ENCODE measurements at regions of chr2 and their contacts with region 1.

Region 1: DNA sequence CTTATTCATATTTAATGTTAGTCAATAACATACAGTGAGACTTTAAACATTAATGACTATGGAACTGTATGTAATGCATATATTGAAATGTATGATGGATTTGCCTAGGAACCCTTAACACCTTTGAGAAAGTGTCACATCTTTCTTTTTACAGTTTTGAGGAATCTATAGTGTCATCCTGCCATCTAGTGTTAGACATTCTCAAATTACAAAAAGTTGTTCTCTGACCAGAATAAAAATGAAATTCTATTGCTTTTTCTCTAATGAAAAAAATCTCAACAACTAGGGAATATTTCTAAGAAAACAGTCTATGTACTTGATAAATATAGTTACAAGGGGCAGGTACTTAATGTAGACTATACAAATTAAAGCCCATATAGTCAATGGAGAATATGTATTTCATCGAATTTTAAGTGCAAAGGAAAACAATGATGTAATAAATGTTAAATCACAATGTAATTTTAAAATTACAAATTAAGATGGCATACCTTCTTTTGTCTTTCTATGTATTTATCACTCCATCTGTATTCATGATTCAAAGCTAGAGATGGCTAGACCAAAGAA is 5.1 kb upstream of the CALCRL start:
- DNase-seq: no peak
- H3K4me3 ChIP-seq: no peak overlapping the region
- H3K27ac ChIP-seq: no peak overlapping the region
- H3K4me1 ChIP-seq: no peaks in the 10 kb centered on the region
- H3K27me3 ChIP-seq: no peaks in the 10 kb centered on the region
- CTCF ChIP-seq: peak in 1 of 3 experiments; percentile 3

Region 2: DNA sequence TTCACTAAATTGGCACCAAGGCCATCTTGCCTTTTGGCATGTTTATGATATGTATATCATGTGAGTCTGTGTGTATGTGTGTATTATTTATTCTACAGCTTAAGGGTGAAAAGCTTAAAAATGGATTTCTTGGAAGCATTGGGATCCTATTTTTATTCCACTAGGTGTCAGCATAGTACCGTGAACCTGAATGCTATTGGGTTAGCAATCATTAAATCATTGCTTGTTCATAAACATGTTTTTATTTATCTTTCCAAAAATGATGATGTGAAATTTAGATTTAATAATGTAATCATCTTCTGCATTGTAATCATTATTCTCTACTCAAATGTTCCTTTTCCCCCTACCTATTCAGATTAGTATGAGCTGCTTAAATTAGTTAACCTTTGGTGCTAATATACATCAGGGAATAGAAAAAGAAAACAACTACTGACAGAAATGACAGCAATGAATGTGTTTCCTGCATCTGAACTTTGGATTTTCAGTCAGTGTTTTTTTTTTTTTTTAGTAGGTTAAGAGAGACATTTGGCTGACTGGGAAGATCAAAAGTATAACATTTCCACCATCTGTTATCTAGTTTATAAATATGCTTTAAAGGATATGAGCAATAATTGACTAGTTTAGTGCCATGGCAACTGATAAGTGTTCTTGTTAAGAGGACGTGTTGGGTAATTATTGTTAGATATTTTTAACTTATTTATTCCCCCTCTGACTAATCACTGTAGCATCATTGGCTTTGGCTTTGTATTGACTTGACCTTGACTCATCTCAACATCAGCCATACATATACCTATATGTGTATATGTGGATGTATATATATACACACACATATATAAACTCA is 590.1 kb before region 1 on chr2:
- dilution Hi-C with region 1: loop called (anchors 25 kb)
- DNase-seq: peak; percentile 7
- H3K4me3 ChIP-seq: no peak overlapping the region
- H3K27ac ChIP-seq: peak overlapping the region; percentile 32
- H3K4me1 ChIP-seq: peaks cover 3% of the 10 kb centered on the region
- H3K27me3 ChIP-seq: no peaks in the 10 kb centered on the region
- CTCF ChIP-seq: peak in 2 of 3 experiments; percentile 48 to 51

Region 3: DNA sequence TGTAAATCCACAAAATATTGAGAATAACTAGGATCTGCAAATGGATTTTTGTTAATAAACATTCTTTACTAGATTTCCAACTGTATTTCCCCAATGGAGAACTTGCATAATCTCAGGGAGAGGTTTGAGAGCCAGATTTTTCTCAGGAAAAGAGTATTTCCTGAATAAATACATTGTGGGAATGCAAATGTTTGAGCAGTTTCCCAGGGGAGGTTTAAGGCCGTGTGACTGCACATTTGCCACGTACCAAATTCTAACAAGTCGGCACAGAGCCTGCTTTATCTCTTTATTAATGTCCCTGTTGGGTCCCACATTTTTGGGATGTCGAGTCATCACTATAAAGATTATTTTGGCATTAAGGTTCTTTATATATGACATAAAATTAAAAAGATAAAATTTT is 74.1 kb after region 1 on chr2:
- dilution Hi-C with region 1: no loop called
- DNase-seq: no peak
- H3K4me3 ChIP-seq: no peak overlapping the region
- H3K27ac ChIP-seq: no peak overlapping the region
- H3K4me1 ChIP-seq: peaks cover 4% of the 10 kb centered on the region
- H3K27me3 ChIP-seq: no peaks in the 10 kb centered on the region
- CTCF ChIP-seq: no peak

Region 4: DNA sequence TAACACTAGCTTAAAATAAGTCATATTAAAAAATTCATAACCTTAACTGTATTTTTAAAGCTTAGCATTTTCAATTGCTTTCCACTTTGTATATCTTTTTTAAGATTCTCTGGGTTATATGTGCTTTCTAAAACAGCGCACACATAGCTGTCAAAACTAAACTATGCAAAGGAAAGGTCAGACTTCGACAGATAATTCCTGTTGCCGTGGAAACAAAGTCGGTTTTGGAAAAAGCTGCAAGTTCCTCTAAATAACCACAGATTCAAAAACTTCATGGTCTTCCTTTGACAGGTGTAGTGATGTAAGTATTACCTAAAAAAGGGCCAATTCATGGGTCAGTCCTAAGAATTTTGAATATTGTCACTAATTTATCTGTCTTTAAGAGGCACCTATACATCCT is 350.7 kb after region 1 on chr2:
- dilution Hi-C with region 1: no loop called
- DNase-seq: no peak
- H3K4me3 ChIP-seq: no peak overlapping the region
- H3K27ac ChIP-seq: no peak overlapping the region
- H3K4me1 ChIP-seq: no peaks in the 10 kb centered on the region
- H3K27me3 ChIP-seq: no peaks in the 10 kb centered on the region
- CTCF ChIP-seq: no peak

Measured in keratinocyte (primary cell).